ENCODE measurements at regions of chr9 and their contacts with region 1.

Region 1: DNA sequence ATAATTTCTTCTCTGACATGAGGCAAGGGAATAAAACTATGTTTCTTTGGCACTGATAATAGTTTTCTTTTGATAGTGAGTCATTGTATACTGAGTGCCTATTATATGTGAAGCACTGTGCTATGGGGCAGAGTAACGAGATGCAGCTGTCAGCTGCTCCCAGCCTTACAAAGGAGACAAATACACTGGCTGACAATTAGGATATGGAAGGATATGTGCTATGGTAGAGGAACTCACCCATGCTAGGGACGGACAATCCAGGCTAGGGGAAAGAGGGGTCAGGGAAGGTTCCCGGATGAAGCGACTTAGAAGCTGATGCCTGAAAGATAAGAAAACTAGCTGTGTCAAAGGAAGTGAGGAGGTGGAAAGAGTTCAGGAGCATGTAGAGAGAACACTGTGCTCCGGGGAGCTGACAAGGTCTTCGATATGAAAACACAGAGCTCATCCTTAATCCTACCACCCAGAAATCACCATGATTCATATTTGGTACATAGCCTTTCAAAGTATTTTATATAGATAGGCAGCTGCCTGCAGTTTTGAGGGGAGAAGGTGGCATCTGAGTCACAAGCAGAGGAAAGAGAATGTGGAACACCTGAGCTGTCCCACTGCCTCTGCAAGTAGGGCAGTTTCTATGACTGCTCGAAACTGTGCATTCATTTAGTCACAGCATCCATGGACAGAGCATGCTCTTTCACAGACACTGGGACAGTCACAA is 12.1 kb downstream of the BSPRY start:
- DNase-seq: no peak
- CTCF ChIP-seq: no peak

Region 2: GRCh38 chr9:113349445-113350094 is 11.9 kb before region 1 on chr9 and contains the start of gene BSPRY:
- CTCF ChIA-PET with region 1: interaction called, 15 read pairs
- POLR2A ChIA-PET with region 1: no interaction called
- DNase-seq: peak; percentile 62
- CTCF ChIP-seq: no peak

Region 3: GRCh38 chr9:113376634-113377567 is 15.4 kb after region 1 on chr9 and contains the start of gene HDHD3:
- CTCF ChIA-PET with region 1: interaction called, 3 read pairs
- POLR2A ChIA-PET with region 1: interaction called, 11 read pairs
- DNase-seq: peak; percentile 94
- CTCF ChIP-seq: no peak

Region 4: DNA sequence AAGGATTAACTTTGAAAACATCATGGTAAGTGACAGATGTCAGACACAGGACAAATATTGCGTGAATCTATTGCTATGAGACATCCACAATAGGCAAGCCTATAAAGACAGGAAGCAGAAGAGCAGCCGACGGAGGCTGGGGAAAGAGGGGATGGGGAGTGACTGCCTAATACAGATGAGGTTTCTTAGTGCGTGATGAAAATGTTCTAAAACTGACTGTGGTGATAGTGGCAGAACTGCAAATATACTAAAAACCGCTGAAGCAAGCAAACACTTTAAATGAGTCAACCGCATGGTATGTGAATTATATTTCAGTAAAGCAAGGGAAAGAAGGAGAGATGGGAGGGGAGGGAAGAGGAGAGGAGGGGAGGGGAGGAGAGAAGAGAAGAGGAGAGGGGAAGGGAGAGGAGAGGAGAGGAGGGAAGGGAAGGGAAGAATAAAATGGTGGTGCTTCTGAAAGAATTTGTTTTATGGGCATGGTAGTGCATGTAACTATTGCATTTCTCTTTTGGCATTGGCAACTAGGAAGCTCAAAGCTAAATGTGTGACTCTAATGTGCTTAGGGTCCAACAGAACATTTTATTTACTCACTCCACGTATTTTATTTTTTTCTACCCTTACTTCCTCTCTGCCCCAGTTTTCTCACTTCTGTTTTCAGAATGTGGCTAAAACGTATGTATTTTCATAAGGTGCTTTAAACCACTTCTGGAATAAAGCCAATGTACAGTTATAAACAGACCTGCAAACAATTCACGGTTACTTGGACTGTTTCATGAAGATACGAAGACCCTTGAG is 1005.1 kb after region 1 on chr9:
- CTCF ChIA-PET with region 1: no interaction called
- POLR2A ChIA-PET with region 1: no interaction called
- DNase-seq: peak; percentile 48
- CTCF ChIP-seq: no peak